ENCODE measurements at regions of chr7 and their contacts with region 1.

Region 1: GRCh38 chr7:444606-445005 is 75.0 kb downstream of the PDGFA start:
- DNase-seq: no peak
- H3K4me3 ChIP-seq: no peak overlapping the region
- H3K27ac ChIP-seq: peak overlapping the region in 1 of 2 donors; percentile 43
- H3K4me1 ChIP-seq: no peaks in the 10 kb centered on the region
- H3K27me3 ChIP-seq: peaks cover 0 to 4% of the 10 kb centered on the region in 2 donors
- CTCF ChIP-seq: no peak
- POLR2A ChIP-seq: no peak

Region 2: DNA sequence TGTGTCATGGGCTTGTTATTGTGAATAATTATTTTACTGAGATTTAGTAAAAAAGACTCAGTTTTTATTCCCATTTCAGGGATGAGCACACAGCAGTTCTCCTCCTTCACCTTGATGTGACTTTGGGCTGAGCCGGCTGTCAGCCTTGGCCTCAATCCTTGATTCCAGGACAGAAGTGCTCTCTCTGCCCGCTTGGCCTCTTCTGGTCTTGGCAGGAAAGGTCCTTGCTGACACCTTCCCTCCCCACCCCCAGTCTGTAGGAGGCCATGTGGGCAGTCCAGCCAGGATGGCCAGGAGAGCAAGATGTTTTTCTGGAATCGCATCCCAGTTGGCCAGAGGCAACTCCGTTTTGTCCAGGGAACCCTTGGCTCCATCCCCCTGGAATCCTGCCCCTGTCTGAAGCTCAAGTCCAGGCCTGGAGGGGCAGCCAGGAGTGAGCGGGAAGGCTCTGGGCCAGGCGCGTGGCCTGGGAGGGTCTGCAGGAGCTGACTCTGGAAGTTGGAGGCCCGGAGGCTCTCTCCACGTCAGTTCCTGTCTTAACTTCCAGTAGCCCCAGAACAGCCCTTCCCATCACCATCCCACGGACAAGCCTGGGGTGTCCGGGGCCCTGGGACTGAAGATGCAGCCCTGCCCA is 25.8 kb before region 1 on chr7:
- intact Hi-C with region 1: no loop called
- DNase-seq: peak; percentile 47 to 75
- H3K4me3 ChIP-seq: no peak overlapping the region
- H3K27ac ChIP-seq: no peak overlapping the region
- H3K4me1 ChIP-seq: no peaks in the 10 kb centered on the region
- H3K27me3 ChIP-seq: no peaks in the 10 kb centered on the region
- CTCF ChIP-seq: no peak
- POLR2A ChIP-seq: no peak

Region 3: GRCh38 chr7:1555809-1556540 is 1111.4 kb after region 1 on chr7 and contains the start of gene TMEM184A:
- intact Hi-C with region 1: loop called (anchors 5 kb)
- DNase-seq: peak; percentile 79 to 89
- H3K4me3 ChIP-seq: peak within 1 kb of the TSS in 2 of 3 donors; percentile 19 to 51
- H3K27ac ChIP-seq: peak within 1 kb of the TSS; percentile 92 to 95
- H3K4me1 ChIP-seq: peaks cover 16 to 32% of the 10 kb centered on the region in 2 donors
- H3K27me3 ChIP-seq: no peaks in the 10 kb centered on the region
- CTCF ChIP-seq: peak; percentile 63 to 87 (median 64)
- POLR2A ChIP-seq: no peak
- total RNA-seq, gene TMEM184A: 6.6 to 8.2 TPM in 2 of 3 donors, not detected in the other